Activated CD4-positive, alpha-beta memory T cell treated with anti-CD3 and anti-CD28 coated beads for 36 hours (primary cell): ENCODE measurements at regions of chr3 and their contacts with region 1.

Region 1: GRCh38 chr3:183468424-183468823 is 40.0 kb upstream of the MCF2L2 start:
- DNase-seq: no peak
- H3K4me3 Mint-ChIP-seq: no peak overlapping the region
- H3K27ac Mint-ChIP-seq: peak overlapping the region; percentile 79
- H3K4me1 Mint-ChIP-seq: peaks cover 20% of the 10 kb centered on the region
- H3K27me3 Mint-ChIP-seq: no peaks in the 10 kb centered on the region

Region 2: DNA sequence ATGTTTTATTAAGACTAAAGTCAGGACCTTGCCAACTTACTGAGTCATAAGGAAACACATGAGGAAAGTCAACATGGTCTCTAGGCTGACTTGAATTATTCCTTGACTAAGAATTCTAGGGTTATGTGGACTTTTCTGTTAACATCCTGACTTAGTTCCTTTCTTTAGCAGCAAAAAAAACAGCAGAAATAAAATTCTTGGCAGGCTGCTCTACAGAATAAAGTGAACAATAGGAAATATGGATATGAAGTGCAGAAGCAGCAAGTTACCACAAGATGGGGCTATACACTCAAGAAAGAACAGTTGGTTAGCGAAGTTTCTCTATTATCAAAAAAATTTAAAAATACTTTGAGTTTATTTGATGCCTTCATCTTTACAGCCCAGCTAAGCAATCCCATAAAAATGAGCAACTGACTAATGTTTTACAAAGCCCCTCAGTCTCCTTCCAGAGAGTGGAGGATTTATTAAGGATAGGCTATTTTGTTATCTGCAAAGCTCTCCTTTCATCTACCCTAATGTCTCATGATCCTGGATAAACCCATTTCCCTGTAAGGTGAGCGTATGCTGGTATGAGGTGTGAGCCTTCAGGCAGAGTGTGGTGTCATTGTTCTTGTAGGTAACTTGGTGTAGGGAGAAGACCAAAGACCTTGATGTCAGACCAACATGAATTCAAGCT is 346.0 kb before region 1 on chr3:
- CTCF ChIA-PET with region 1: interaction called, 5 read pairs
- POLR2A ChIA-PET with region 1: no interaction called
- intact Hi-C with region 1: loop called (anchors 1 kb)
- DNase-seq: no peak
- H3K4me3 Mint-ChIP-seq: no peak overlapping the region
- H3K27ac Mint-ChIP-seq: no peak overlapping the region
- H3K4me1 Mint-ChIP-seq: peaks cover 6% of the 10 kb centered on the region
- H3K27me3 Mint-ChIP-seq: peaks cover 3% of the 10 kb centered on the region

Region 3: DNA sequence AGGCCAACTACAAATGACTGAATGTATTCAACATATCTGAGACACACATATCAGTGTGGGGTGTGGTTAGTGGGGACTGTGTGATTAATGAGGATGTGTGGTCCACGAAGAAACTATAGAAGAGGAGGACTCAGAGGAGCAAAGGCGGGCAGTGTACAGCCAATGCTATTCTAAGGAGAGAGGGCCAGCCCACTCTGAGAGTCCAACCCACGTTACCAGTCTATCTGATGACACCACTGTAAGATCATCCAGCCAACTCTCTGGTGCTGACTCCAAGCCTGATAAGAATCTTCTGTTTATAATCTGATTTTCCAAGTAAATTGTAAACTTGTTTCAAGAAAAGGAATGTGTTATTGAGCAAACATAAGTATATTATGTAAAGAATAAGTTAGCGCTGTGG is 87.2 kb before region 1 on chr3:
- CTCF ChIA-PET with region 1: no interaction called
- POLR2A ChIA-PET with region 1: no interaction called
- intact Hi-C with region 1: no loop called
- DNase-seq: no peak
- H3K4me3 Mint-ChIP-seq: no peak overlapping the region
- H3K27ac Mint-ChIP-seq: no peak overlapping the region
- H3K4me1 Mint-ChIP-seq: peaks cover 19% of the 10 kb centered on the region
- H3K27me3 Mint-ChIP-seq: no peaks in the 10 kb centered on the region

Region 4: GRCh38 chr3:183400352-183400751 is 68.1 kb before region 1 on chr3:
- CTCF ChIA-PET with region 1: no interaction called
- POLR2A ChIA-PET with region 1: no interaction called
- intact Hi-C with region 1: no loop called
- DNase-seq: no peak
- H3K4me3 Mint-ChIP-seq: no peak overlapping the region
- H3K27ac Mint-ChIP-seq: no peak overlapping the region
- H3K4me1 Mint-ChIP-seq: peaks cover 8% of the 10 kb centered on the region
- H3K27me3 Mint-ChIP-seq: no peaks in the 10 kb centered on the region

Region 5: GRCh38 chr3:183447206-183448001 is 21.0 kb before region 1 on chr3:
- CTCF ChIA-PET with region 1: interaction called, 5 read pairs
- POLR2A ChIA-PET with region 1: no interaction called
- intact Hi-C with region 1: loop called (anchors 2 kb)
- DNase-seq: peak; percentile 90
- H3K4me3 Mint-ChIP-seq: peak overlapping the region; percentile 91
- H3K27ac Mint-ChIP-seq: peak overlapping the region; percentile 66
- H3K4me1 Mint-ChIP-seq: peaks cover 12% of the 10 kb centered on the region
- H3K27me3 Mint-ChIP-seq: no peaks in the 10 kb centered on the region

Region 6: GRCh38 chr3:183591881-183592521 is 123.6 kb after region 1 on chr3:
- CTCF ChIA-PET with region 1: interaction called, 7 read pairs
- POLR2A ChIA-PET with region 1: interaction called, 3 read pairs
- intact Hi-C with region 1: loop called (anchors 1 kb)
- DNase-seq: no peak
- H3K4me3 Mint-ChIP-seq: peak overlapping the region; percentile 59
- H3K27ac Mint-ChIP-seq: peak overlapping the region; percentile 69
- H3K4me1 Mint-ChIP-seq: peaks cover 32% of the 10 kb centered on the region
- H3K27me3 Mint-ChIP-seq: no peaks in the 10 kb centered on the region

Region 7: DNA sequence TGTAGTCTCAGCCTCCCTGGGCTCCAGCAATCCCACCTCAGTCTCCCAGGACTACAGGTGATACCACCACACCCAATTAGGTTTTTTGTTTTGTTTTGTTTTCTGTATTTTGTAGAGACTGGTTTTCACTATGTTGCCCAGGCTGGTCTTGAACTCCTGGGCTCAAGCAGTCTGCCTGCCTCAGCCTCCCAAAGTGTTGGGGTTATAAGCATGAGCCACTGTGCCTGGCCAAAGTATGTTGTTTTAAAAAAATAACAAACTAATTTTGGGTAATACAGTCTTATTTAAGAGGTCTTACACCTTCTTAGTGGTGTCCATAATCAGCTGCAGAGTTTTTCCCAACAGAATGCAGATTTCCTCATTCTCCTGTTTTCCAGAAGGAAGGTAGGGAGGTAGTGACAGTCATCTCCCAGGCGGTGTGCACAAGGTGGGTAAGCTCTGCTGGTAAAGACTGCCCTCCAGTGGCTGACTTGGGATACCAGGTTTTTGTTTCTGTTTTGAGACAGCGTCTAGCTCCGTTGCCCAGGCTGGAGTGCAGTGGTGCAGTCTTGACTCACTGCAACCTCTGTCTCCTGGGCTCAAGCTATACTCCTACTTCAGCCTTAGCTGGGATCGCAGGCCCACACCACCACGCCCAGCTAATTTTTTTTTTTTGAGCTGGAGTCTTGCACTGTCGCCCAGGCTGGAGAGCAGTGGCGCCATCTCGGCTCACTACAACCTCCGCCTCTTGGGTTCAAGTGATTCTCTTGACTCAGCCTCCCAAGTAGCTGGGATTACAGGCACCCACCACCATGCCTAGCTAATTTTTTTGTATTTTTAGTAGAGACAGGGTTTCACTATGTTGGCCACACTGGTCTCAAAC is 298.6 kb after region 1 on chr3:
- CTCF ChIA-PET with region 1: interaction called, 34 read pairs
- POLR2A ChIA-PET with region 1: no interaction called
- intact Hi-C with region 1: loop called (anchors 1 kb)
- DNase-seq: peak; percentile 81
- H3K4me3 Mint-ChIP-seq: no peak overlapping the region
- H3K27ac Mint-ChIP-seq: no peak overlapping the region
- H3K4me1 Mint-ChIP-seq: peaks cover 5% of the 10 kb centered on the region
- H3K27me3 Mint-ChIP-seq: no peaks in the 10 kb centered on the region

Region 8: DNA sequence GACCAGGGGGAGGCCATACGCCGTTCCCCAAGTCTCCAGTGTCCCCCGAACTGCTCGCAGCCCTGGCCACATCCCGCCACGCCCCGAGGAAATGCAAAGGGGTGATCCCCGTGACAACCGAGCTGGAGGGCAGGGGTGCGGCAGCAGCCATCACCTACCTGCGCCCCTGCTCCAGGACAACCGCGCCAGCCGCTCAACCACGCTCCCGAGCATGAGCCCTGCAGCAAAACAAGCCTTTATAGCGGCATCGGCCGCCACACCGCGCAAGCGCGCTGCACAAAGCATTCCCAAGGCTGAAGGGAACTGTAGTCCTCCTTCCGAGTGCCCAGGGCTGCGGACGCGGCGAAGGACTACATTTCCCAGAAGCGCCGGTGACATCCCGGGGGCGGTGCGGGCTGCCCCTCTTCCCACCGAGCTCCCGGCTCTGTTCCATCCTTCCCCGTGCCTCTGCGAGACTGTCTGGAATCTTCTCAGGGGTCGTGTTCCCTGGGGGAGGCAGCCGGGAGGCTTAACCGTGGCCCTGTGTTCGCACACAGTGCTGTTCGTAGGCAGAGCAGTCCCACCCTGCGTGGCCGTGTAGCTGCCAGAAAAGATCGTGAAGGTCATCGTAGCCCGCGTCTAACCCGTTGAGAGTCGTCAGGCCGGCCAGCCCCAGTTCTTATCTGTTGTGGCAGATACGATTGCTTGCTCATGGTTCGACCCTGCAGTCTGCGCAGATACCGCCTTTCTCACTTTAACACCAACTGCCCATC is 549.4 kb after region 1 on chr3 and contains the start of gene ABCC5:
- CTCF ChIA-PET with region 1: no interaction called
- POLR2A ChIA-PET with region 1: no interaction called
- intact Hi-C with region 1: loop called (anchors 5 kb)
- DNase-seq: peak; percentile 89
- H3K4me3 Mint-ChIP-seq: peak within 1 kb of the TSS; percentile 99
- H3K27ac Mint-ChIP-seq: peak within 1 kb of the TSS; percentile 85
- H3K4me1 Mint-ChIP-seq: peaks cover 23% of the 10 kb centered on the region
- H3K27me3 Mint-ChIP-seq: peaks cover 5% of the 10 kb centered on the region
- total RNA-seq, gene ABCC5: 13.3 to 15.6 TPM